ENCODE measurements at regions of chr4 and their contacts with region 1.

Region 1: DNA sequence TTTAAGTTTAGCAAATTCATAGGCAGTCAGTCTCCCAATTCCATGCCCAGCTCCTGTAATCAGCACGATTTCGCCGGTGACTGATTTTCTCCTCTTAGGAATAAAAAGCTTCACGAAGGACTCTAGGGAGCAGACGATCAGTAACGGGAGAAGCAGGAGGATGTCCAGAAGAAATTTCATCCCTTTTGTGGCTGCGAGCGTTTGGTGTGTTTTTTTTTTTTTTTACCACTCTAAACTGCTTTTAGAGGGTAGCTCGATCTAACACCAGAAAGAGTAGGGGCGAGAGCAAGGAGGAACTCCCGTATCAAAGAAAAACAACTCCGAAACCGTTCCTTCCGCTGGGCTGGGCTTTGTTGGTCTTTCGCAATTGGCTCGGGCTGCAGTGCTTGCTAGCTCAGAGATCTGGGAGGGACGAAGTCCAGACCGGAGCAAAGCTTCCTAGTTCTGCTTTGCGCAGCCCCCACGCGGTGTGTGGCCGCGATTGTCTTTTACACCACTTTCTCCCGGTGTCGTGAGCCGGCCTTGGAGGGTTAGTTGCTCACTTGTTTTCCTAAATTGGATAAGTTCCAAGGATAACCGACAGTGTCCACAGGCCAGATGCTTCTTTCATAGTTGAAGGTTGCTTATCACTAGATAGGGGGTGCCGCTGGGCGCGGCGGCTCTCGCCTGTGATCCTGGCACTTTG is at the start of gene HSD17B11:
- DNase-seq: peak; percentile 91
- ATAC-seq: peak; percentile 100
- H3K4me3 ChIP-seq: peak within 1 kb of the TSS; percentile 69 to 94 (median 92)
- H3K4me3 Mint-ChIP-seq: peak within 1 kb of the TSS; percentile 97
- H3K27ac ChIP-seq: peak within 1 kb of the TSS; percentile 69 to 82
- H3K27ac Mint-ChIP-seq: peak within 1 kb of the TSS; percentile 93
- H3K4me1 ChIP-seq: peaks cover 24 to 30% of the 10 kb centered on the region in 2 donors
- H3K4me1 Mint-ChIP-seq: peaks cover 47% of the 10 kb centered on the region
- H3K27me3 ChIP-seq: no peaks in the 10 kb centered on the region
- H3K27me3 Mint-ChIP-seq: no peaks in the 10 kb centered on the region
- CTCF ChIP-seq: no peak
- total RNA-seq, gene HSD17B11: 62.2 and 71.0 TPM in 2 replicates

Region 2: GRCh38 chr4:87235020-87235671 is 155.9 kb before region 1 on chr4:
- CTCF ChIA-PET with region 1: interaction called, 5 read pairs
- POLR2A ChIA-PET with region 1: interaction called, 3 read pairs
- intact Hi-C with region 1: loop called (anchors 5 kb)
- DNase-seq: peak; percentile 12
- ATAC-seq: no peak
- H3K4me3 ChIP-seq: peak overlapping the region in 4 of 5 experiments; percentile 35 to 66 (median 44)
- H3K4me3 Mint-ChIP-seq: peak overlapping the region; percentile 74
- H3K27ac ChIP-seq: no peak overlapping the region
- H3K27ac Mint-ChIP-seq: no peak overlapping the region
- H3K4me1 ChIP-seq: peaks cover 0 to 6% of the 10 kb centered on the region in 2 donors
- H3K4me1 Mint-ChIP-seq: peaks cover 4% of the 10 kb centered on the region
- H3K27me3 ChIP-seq: no peaks in the 10 kb centered on the region
- H3K27me3 Mint-ChIP-seq: peaks cover 5% of the 10 kb centered on the region
- CTCF ChIP-seq: no peak

Region 3: DNA sequence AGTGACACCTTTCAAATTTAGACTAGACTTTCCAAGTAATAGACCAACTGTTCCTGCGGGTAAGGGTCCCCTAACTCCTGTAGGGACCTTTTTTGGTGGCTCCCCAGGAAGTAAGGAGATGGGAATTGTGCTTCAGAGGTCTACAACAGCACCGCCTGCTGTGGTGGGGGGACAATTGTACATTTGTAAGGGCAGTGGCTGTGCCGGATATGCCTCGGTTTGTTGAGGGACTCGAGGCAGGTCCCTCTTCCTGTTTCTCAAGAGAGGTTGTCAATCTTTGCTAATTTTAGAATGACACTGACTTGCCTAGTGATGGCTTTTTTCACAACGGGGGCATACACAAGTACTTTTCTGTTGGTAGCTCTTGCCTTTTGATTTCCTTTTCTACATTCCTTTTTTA is 15.4 kb after region 1 on chr4:
- CTCF ChIA-PET with region 1: interaction called, 3 read pairs
- POLR2A ChIA-PET with region 1: no interaction called
- intact Hi-C with region 1: loop called (anchors 2 kb)
- DNase-seq: peak; percentile 36
- ATAC-seq: peak; percentile 49
- H3K4me3 ChIP-seq: peak overlapping the region in 2 of 5 experiments; percentile 29 to 47
- H3K4me3 Mint-ChIP-seq: peak overlapping the region; percentile 68
- H3K27ac ChIP-seq: no peak overlapping the region
- H3K27ac Mint-ChIP-seq: peak overlapping the region; percentile 32
- H3K4me1 ChIP-seq: peaks cover 10 to 13% of the 10 kb centered on the region in 2 donors
- H3K4me1 Mint-ChIP-seq: peaks cover 18% of the 10 kb centered on the region
- H3K27me3 ChIP-seq: no peaks in the 10 kb centered on the region
- H3K27me3 Mint-ChIP-seq: peaks cover 23% of the 10 kb centered on the region
- CTCF ChIP-seq: no peak

Region 4: GRCh38 chr4:87465739-87466366 is 74.8 kb after region 1 on chr4:
- CTCF ChIA-PET with region 1: interaction called, 7 read pairs
- POLR2A ChIA-PET with region 1: no interaction called
- intact Hi-C with region 1: loop called (anchors 5 kb)
- DNase-seq: peak; percentile 59
- ATAC-seq: no peak
- H3K4me3 ChIP-seq: no peak overlapping the region
- H3K4me3 Mint-ChIP-seq: no peak overlapping the region
- H3K27ac ChIP-seq: no peak overlapping the region
- H3K27ac Mint-ChIP-seq: no peak overlapping the region
- H3K4me1 ChIP-seq: no peaks in the 10 kb centered on the region
- H3K4me1 Mint-ChIP-seq: no peaks in the 10 kb centered on the region
- H3K27me3 ChIP-seq: no peaks in the 10 kb centered on the region
- H3K27me3 Mint-ChIP-seq: no peaks in the 10 kb centered on the region
- CTCF ChIP-seq: peak; percentile 92

Measured in B cell (primary cell).